ENCODE measurements at regions of chr6 and their contacts with region 1.

Region 1: GRCh38 chr6:90575267-90575666 is 11.6 kb downstream of the MAP3K7 start:
- DNase-seq: no peak
- H3K4me3 ChIP-seq: no peak overlapping the region
- H3K27ac ChIP-seq: no peak overlapping the region
- H3K4me1 ChIP-seq: no peaks in the 10 kb centered on the region
- H3K27me3 ChIP-seq: no peaks in the 10 kb centered on the region
- CTCF ChIP-seq: no peak

Region 2: GRCh38 chr6:89582669-89583325 is 992.5 kb before region 1 on chr6:
- CTCF ChIA-PET with region 1: no interaction called
- POLR2A ChIA-PET with region 1: interaction called, 29 read pairs
- intact Hi-C with region 1: no loop called
- DNase-seq: no peak
- H3K4me3 ChIP-seq: no peak overlapping the region
- H3K27ac ChIP-seq: no peak overlapping the region
- H3K4me1 ChIP-seq: no peaks in the 10 kb centered on the region
- H3K27me3 ChIP-seq: no peaks in the 10 kb centered on the region
- CTCF ChIP-seq: no peak

Region 3: GRCh38 chr6:91447530-91448254 is 872.4 kb after region 1 on chr6:
- CTCF ChIA-PET with region 1: no interaction called
- POLR2A ChIA-PET with region 1: no interaction called
- intact Hi-C with region 1: no loop called
- DNase-seq: no peak
- H3K4me3 ChIP-seq: no peak overlapping the region
- H3K27ac ChIP-seq: no peak overlapping the region
- H3K4me1 ChIP-seq: no peaks in the 10 kb centered on the region
- H3K27me3 ChIP-seq: no peaks in the 10 kb centered on the region
- CTCF ChIP-seq: no peak